Posterior cingulate gyrus (tissue), 11 donors: ENCODE measurements at regions of chr17 and their contacts with region 1.

Region 1: DNA sequence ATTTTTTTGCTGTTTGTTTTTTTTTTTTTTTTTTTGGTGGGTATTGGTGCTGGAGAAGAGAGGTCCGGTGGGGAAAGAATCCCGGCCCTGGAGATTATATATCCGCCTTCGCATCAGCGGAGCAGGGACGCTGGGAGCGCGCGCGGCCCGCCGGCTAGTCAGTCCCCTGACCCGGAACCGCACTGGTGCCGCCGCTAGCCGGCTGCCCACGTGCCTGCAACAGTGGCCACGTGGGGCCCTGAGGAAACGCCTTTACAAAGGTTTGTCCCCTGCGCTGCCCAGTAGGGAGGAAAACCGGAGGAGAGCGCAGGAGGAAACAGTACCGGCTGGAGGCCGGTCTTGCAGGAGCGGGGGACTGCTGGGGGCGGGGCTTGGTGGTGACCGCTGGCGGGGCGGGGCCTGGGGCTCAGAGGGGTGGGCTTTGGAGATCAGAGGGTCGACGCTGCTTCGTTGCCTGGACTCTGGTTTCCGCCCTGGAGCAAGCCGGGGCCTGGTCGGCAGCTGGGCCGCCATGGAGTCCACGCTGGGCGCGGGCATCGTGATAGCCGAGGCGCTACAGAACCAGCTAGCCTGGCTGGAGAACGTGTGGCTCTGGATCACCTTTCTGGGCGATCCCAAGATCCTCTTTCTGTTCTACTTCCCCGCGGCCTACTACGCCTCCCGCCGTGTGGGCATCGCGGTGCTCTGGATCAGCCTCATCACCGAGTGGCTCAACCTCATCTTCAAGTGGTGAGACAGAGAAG is at the start of gene G6PC3:
- DNase-seq: peak; percentile 93 to 99 (median 95)

Region 2: DNA sequence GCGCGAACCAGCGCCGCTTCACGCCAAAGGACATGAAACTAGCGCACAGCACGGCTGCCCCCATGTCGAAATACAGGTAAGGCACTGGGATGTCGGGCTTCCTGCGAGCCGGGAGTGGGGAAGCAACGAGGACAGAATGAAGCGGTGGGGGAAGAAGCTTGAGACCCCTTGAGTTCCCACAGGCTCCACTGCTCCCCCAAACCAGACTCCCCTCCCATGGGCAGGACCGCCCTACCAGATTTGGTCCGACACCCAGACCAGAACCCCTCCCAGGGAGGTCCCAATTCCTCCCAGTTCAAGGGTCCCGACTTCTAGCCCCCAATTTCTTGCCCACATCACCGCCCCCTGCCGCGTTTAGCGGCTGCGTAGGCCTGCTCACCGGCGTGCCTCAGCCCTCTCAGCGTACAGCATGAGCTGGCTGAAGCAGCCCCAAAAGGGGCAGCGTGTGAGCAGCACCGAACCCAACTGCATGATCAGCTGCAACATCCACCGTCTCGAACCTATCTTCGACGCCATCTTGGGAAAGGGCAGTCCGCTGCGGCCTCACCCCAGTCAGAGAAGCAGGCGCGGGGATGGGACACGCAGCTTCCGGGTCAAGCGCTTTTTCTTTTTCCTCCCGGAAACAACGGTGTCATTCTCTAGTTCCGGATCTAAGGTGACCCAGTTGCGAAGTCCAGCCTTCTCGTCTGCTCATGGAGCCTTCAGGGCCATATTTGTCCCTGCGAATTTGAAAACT is 56.0 kb before region 1 on chr17 and contains the start of gene TMEM101:
- intact Hi-C with region 1: loop called (anchors 10 kb)
- DNase-seq: peak; percentile 85 to 98 (median 91)

Region 3: GRCh38 chr17:44110823-44111633 is 40.4 kb after region 1 on chr17:
- intact Hi-C with region 1: loop called (anchors 2 kb)
- DNase-seq: peak; percentile 94 to 99 (median 98)

Region 4: DNA sequence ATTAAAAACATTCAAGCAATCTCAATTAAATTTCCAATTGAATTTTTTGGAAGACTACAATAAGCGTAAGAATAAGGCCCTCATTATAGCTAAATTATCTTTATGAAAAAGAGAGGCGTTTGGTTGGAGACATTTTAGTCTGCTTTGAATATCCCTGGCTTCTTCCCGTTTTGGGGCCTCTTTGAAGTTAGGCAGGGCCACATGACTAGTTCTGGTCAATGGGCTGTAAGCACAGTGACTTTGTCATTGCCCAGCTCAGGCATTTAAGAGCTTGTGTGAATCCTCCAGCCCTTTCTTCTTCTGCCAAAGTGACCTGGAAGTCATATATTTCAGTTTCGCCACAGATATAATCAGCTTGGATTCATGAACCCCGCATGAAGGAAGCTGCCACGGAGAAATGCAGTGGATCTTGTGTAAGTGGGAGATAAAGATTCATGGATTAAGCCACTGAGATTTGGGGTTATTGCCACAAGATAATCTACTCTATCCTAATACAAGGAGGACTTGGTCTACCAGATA is 170.5 kb after region 1 on chr17:
- intact Hi-C with region 1: no loop called
- DNase-seq: no peak